ENCODE measurements at regions of chr12 and their contacts with region 1.

Region 1: GRCh38 chr12:71746983-71747611 is 7.6 kb upstream of the RAB21 start:
- DNase-seq: peak; percentile 76
- ATAC-seq: peak; percentile 96
- H3K4me3 ChIP-seq: no peak overlapping the region
- H3K4me3 Mint-ChIP-seq: no peak overlapping the region
- H3K27ac ChIP-seq: no peak overlapping the region
- H3K27ac Mint-ChIP-seq: no peak overlapping the region
- H3K4me1 ChIP-seq: no peaks in the 10 kb centered on the region
- H3K4me1 Mint-ChIP-seq: peaks cover 1% of the 10 kb centered on the region
- H3K27me3 ChIP-seq: no peaks in the 10 kb centered on the region
- H3K27me3 Mint-ChIP-seq: peaks cover 17% of the 10 kb centered on the region
- CTCF ChIP-seq: peak; percentile 86

Region 2: GRCh38 chr12:69879041-69879960 is 1867.8 kb before region 1 on chr12:
- CTCF ChIA-PET with region 1: interaction called, 10 read pairs
- POLR2A ChIA-PET with region 1: no interaction called
- intact Hi-C with region 1: no loop called
- DNase-seq: peak; percentile 74
- ATAC-seq: peak; percentile 82
- H3K4me3 ChIP-seq: no peak overlapping the region
- H3K4me3 Mint-ChIP-seq: no peak overlapping the region
- H3K27ac ChIP-seq: no peak overlapping the region
- H3K27ac Mint-ChIP-seq: peak overlapping the region; percentile 50
- H3K4me1 ChIP-seq: peaks cover 4% of the 10 kb centered on the region in 2 donors
- H3K4me1 Mint-ChIP-seq: peaks cover 5% of the 10 kb centered on the region
- H3K27me3 ChIP-seq: peaks cover 0 to 9% (median 2%) of the 10 kb centered on the region in 4 experiments
- H3K27me3 Mint-ChIP-seq: peaks cover 27% of the 10 kb centered on the region
- CTCF ChIP-seq: peak; percentile 89

Region 3: GRCh38 chr12:71415336-71416231 is 331.5 kb before region 1 on chr12:
- CTCF ChIA-PET with region 1: interaction called, 116 read pairs
- POLR2A ChIA-PET with region 1: no interaction called
- intact Hi-C with region 1: loop called (anchors 1 kb)
- DNase-seq: peak; percentile 63
- ATAC-seq: no peak
- H3K4me3 ChIP-seq: no peak overlapping the region
- H3K4me3 Mint-ChIP-seq: no peak overlapping the region
- H3K27ac ChIP-seq: no peak overlapping the region
- H3K27ac Mint-ChIP-seq: no peak overlapping the region
- H3K4me1 ChIP-seq: no peaks in the 10 kb centered on the region
- H3K4me1 Mint-ChIP-seq: no peaks in the 10 kb centered on the region
- H3K27me3 ChIP-seq: no peaks in the 10 kb centered on the region
- H3K27me3 Mint-ChIP-seq: no peaks in the 10 kb centered on the region
- CTCF ChIP-seq: peak; percentile 84

Region 4: GRCh38 chr12:71636704-71637115 is 110.4 kb before region 1 on chr12:
- CTCF ChIA-PET with region 1: interaction called, 90 read pairs
- POLR2A ChIA-PET with region 1: no interaction called
- intact Hi-C with region 1: loop called (anchors 1 kb)
- DNase-seq: peak; percentile 75
- ATAC-seq: peak; percentile 54
- H3K4me3 ChIP-seq: no peak overlapping the region
- H3K4me3 Mint-ChIP-seq: no peak overlapping the region
- H3K27ac ChIP-seq: no peak overlapping the region
- H3K27ac Mint-ChIP-seq: no peak overlapping the region
- H3K4me1 ChIP-seq: no peaks in the 10 kb centered on the region
- H3K4me1 Mint-ChIP-seq: peaks cover 4% of the 10 kb centered on the region
- H3K27me3 ChIP-seq: no peaks in the 10 kb centered on the region
- H3K27me3 Mint-ChIP-seq: no peaks in the 10 kb centered on the region
- CTCF ChIP-seq: peak; percentile 92

Region 5: GRCh38 chr12:71663561-71664294 is 83.4 kb before region 1 on chr12 and contains the start of gene ZFC3H1:
- CTCF ChIA-PET with region 1: interaction called, 116 read pairs
- POLR2A ChIA-PET with region 1: interaction called, 12 read pairs
- intact Hi-C with region 1: loop called (anchors 1 kb)
- DNase-seq: peak; percentile 98
- ATAC-seq: peak; percentile 82
- H3K4me3 ChIP-seq: peak within 1 kb of the TSS; percentile 82 to 97 (median 88)
- H3K4me3 Mint-ChIP-seq: peak within 1 kb of the TSS; percentile 96
- H3K27ac ChIP-seq: peak within 1 kb of the TSS; percentile 93 to 97
- H3K27ac Mint-ChIP-seq: peak within 1 kb of the TSS; percentile 100
- H3K4me1 ChIP-seq: peaks cover 28% of the 10 kb centered on the region in 2 donors
- H3K4me1 Mint-ChIP-seq: peaks cover 57% of the 10 kb centered on the region
- H3K27me3 ChIP-seq: no peaks in the 10 kb centered on the region
- H3K27me3 Mint-ChIP-seq: no peaks in the 10 kb centered on the region
- CTCF ChIP-seq: peak; percentile 17
- total RNA-seq, gene ZFC3H1: 141 and 154 TPM in 2 replicates

Region 6: GRCh38 chr12:71694099-71694820 is 52.8 kb before region 1 on chr12:
- CTCF ChIA-PET with region 1: interaction called, 5 read pairs
- POLR2A ChIA-PET with region 1: no interaction called
- intact Hi-C with region 1: loop called (anchors 2 kb)
- DNase-seq: peak; percentile 73
- ATAC-seq: peak; percentile 84
- H3K4me3 ChIP-seq: peak overlapping the region in 4 of 5 experiments; percentile 10 to 34 (median 25)
- H3K4me3 Mint-ChIP-seq: peak overlapping the region; percentile 72
- H3K27ac ChIP-seq: peak overlapping the region; percentile 86 to 95
- H3K27ac Mint-ChIP-seq: peak overlapping the region; percentile 88
- H3K4me1 ChIP-seq: peaks cover 72 to 76% of the 10 kb centered on the region in 2 donors
- H3K4me1 Mint-ChIP-seq: peaks cover 69% of the 10 kb centered on the region
- H3K27me3 ChIP-seq: no peaks in the 10 kb centered on the region
- H3K27me3 Mint-ChIP-seq: no peaks in the 10 kb centered on the region
- CTCF ChIP-seq: no peak

Region 7: DNA sequence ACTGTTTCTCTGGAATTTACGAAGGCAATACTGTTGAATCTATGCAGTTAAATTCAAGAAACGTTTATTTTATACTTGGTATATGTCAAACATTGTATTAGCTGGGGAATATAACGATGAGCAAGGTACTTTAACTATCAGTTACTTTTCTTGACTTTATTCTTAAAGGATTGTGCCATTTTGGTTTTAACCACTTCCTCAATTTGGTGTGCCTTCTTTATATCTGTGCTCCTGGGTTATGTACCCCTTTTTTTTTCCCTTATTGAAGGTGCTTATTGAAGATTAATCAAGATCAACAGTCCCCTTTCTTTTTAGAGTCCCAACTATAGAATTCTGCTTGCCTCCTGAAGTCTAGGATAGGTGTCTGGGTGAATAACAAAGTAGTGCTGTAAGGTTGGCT is 13.4 kb after region 1 on chr12:
- CTCF ChIA-PET with region 1: interaction called, 15 read pairs
- POLR2A ChIA-PET with region 1: no interaction called
- intact Hi-C with region 1: no loop called
- DNase-seq: no peak
- ATAC-seq: no peak
- H3K4me3 ChIP-seq: no peak overlapping the region
- H3K4me3 Mint-ChIP-seq: no peak overlapping the region
- H3K27ac ChIP-seq: no peak overlapping the region
- H3K27ac Mint-ChIP-seq: no peak overlapping the region
- H3K4me1 ChIP-seq: peaks cover 15 to 18% of the 10 kb centered on the region in 2 donors
- H3K4me1 Mint-ChIP-seq: peaks cover 56% of the 10 kb centered on the region
- H3K27me3 ChIP-seq: no peaks in the 10 kb centered on the region
- H3K27me3 Mint-ChIP-seq: no peaks in the 10 kb centered on the region
- CTCF ChIP-seq: no peak